Vagina (tissue), 2 donors: ENCODE measurements at regions of chr6 and their contacts with region 1.

Region 1: GRCh38 chr6:113457198-113457597 is 399.9 kb upstream of the MARCKS start:
- DNase-seq: no peak
- H3K4me3 ChIP-seq: no peak overlapping the region
- H3K27ac ChIP-seq: no peak overlapping the region
- H3K4me1 ChIP-seq: no peaks in the 10 kb centered on the region
- H3K27me3 ChIP-seq: no peaks in the 10 kb centered on the region
- CTCF ChIP-seq: no peak
- POLR2A ChIP-seq: no peak

Region 2: DNA sequence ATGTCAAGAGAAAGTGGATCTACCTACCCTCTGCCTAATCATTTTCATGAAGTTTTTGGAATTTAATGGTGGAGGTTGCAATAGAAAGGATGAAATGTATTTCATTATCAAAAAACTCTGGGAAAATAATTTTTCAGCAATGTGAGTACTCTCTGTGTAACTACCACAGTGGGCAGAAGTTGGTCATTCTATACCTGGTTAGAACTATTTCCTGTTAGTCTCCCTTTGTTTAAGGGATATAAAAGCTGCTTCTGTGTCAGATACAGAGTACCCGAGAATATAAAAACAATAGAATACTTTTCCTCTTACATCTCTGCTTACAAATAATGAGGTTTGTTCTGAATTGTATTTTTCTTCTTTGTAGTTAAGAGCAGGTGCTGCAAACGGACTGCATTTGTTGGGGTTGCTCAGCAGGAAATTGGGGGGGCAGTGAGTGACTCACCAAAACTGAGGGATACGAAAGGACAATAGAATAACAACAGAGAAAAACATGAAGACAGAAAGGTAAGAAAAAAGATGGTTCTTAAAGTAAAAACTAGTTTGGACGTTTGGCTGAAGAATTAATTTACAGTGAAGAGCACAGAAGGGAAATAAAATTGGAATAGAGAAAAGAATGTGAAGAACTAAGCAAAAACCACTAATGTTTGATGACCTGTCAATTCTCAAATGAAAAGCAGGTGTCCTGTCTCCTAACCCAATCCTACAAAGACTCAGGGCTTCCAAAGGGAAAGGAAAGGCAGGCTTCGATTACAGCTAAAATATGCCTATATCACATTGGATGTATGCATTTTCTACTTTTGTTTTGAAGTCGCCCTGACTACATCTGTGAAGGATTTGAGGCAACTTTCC is 407.0 kb before region 1 on chr6:
- intact Hi-C with region 1: no loop called
- DNase-seq: no peak
- H3K4me3 ChIP-seq: no peak overlapping the region
- H3K27ac ChIP-seq: no peak overlapping the region
- H3K4me1 ChIP-seq: no peaks in the 10 kb centered on the region
- H3K27me3 ChIP-seq: no peaks in the 10 kb centered on the region
- CTCF ChIP-seq: no peak
- POLR2A ChIP-seq: no peak

Region 3: GRCh38 chr6:113437566-113437965 is 19.6 kb before region 1 on chr6:
- intact Hi-C with region 1: loop called (anchors 2 kb)
- DNase-seq: no peak
- H3K4me3 ChIP-seq: no peak overlapping the region
- H3K27ac ChIP-seq: no peak overlapping the region
- H3K4me1 ChIP-seq: peaks cover 18% of the 10 kb centered on the region
- H3K27me3 ChIP-seq: no peaks in the 10 kb centered on the region
- CTCF ChIP-seq: no peak
- POLR2A ChIP-seq: no peak